Spleen (tissue), 13 donors: ENCODE measurements at regions of chr16 and their contacts with region 1.

Region 1: DNA sequence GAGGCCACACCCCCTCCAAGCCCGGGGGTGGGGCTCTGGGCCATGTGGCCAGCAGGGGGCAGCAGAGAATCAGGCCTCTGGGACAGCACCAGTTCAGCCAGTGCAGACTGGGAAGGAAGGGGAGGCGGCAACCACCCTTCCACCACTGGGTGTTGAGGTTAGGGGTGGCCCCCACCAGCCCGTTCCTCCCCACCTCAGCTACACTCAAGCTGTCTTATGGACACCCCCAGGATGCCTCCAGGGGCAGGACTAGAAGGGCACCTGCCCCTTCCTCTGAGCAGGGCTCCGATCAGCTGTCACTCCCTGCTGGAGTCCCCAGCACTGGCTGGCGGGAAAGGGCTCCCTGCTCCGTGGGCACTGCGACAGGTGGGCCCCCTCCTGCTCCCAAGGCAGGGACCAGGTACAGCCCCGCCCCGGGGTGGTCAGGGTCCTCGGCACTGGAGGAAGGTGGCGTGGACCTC is 21.8 kb downstream of the KATNB1 start:
- DNase-seq: peak; percentile 96
- H3K4me3 ChIP-seq: no peak overlapping the region
- H3K27ac ChIP-seq: peak overlapping the region in 2 of 8 donors; percentile 45 to 48
- H3K4me1 ChIP-seq: peaks cover 0 to 22% (median 7%) of the 10 kb centered on the region in 6 donors
- H3K27me3 ChIP-seq: no peaks in the 10 kb centered on the region
- CTCF ChIP-seq: peak; percentile 81 to 100 (median 98)
- POLR2A ChIP-seq: no peak

Region 2: DNA sequence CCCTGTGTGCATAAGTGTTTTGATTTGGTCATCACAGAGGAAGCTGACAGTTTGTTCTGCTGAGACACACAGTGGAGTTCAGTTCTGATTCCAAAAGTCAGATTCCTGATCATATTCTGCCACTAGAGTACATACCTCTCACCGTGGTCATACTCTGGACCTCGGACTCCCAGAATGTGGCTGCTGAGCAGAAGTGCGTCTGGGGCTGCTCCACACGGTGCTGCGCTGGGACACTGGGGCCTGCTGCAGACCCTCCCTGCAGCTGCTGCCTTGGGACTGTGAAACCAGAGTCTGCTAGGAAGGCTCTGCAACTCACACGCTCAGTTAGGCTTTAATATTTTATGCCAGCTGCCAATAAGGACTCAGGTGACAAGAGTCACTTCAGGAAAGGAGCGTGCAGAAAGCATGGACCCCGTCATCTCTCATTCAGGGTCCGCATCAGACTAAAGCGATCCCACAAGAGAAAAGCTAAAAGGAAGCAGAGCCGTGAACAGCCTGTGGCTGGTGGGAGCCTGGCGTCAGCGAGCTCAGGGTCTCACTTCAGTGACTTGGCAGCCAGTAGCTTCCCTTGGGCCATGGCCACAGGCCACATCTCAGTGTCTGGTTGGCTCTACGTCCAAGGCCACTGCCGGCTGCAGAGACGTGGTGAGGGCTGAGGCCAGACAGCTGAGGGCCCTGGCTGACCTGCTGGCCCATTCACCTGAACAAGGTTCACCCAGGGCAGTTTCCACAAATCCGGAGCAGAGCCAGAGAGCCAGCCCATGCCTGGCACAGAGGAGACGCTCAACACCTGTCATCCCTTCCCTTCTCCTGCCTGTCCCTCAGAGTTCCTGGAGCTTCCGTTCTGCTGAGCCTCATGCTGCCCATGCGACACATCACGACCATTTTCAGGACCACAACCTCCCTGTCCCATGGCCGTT is 69.6 kb after region 1 on chr16:
- intact Hi-C with region 1: no loop called
- DNase-seq: peak; percentile 32
- H3K4me3 ChIP-seq: no peak overlapping the region
- H3K27ac ChIP-seq: no peak overlapping the region
- H3K4me1 ChIP-seq: peaks cover 0 to 23% (median 4%) of the 10 kb centered on the region in 6 donors
- H3K27me3 ChIP-seq: no peaks in the 10 kb centered on the region
- CTCF ChIP-seq: no peak
- POLR2A ChIP-seq: no peak

Region 3: GRCh38 chr16:57863434-57864160 is 106.2 kb after region 1 on chr16:
- intact Hi-C with region 1: loop called (anchors 10 kb)
- DNase-seq: no peak
- H3K4me3 ChIP-seq: no peak overlapping the region
- H3K27ac ChIP-seq: no peak overlapping the region
- H3K4me1 ChIP-seq: peaks cover 0 to 12% (median 4%) of the 10 kb centered on the region in 6 donors
- H3K27me3 ChIP-seq: peaks cover 0 to 10% (median 0%) of the 10 kb centered on the region in 7 donors
- CTCF ChIP-seq: peak in 9 of 11 experiments; percentile 9 to 63 (median 54)
- POLR2A ChIP-seq: no peak